CD8-positive, alpha-beta T cell (primary cell): ENCODE measurements at regions of chr12 and their contacts with region 1.

Region 1: DNA sequence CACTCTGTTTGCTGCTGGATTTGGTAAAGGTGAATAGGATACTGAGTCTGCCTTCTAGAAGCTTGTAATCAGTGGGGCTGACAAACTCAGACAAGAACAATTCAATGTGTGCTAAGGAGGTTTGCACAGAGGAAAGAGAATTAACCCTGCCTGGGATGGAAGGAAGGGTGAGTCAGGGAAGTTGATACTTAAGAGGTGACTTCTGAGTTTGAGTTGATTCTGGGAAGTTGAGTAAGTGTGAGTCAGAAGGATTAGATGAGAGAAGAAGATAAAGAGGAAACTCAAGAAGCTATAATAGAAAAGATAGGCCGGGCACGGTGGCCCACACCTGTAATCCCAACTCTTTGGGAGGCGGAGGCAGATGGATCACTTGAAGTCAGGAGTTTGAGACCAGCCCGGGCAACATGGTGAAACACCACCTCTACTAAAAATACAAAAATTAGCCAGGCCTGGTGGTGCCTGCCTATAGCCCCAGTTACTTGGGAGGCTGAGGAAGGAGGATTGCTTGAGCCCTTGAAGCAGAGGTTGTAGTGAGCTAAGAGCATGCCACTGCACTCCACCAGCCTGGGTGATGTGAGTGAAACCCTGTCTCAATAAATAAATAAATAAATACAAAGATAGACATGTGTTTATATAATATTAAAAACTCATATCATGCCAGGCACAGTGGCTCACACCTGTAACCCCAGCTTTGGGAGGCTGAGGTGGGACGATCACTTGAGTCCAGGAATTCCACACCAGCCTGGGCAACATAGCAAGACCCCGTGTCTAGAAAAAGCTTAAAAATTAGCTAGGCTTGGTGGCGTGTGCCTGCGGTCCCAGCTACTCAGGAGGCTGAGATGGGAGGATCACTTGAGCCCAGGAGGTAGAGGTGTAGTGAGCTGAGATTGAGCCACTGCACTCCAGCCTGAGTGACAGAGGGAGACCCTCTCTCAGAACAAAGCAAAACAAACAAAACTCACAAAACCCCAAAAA is 126.8 kb upstream of the CPM start:
- DNase-seq: no peak
- ATAC-seq: no peak
- H3K4me3 ChIP-seq: no peak overlapping the region
- H3K4me3 Mint-ChIP-seq: no peak overlapping the region
- H3K27ac ChIP-seq: no peak overlapping the region
- H3K27ac Mint-ChIP-seq: no peak overlapping the region
- H3K4me1 ChIP-seq: no peaks in the 10 kb centered on the region
- H3K4me1 Mint-ChIP-seq: no peaks in the 10 kb centered on the region
- H3K27me3 ChIP-seq: no peaks in the 10 kb centered on the region
- H3K27me3 Mint-ChIP-seq: no peaks in the 10 kb centered on the region
- CTCF ChIP-seq: no peak

Region 2: DNA sequence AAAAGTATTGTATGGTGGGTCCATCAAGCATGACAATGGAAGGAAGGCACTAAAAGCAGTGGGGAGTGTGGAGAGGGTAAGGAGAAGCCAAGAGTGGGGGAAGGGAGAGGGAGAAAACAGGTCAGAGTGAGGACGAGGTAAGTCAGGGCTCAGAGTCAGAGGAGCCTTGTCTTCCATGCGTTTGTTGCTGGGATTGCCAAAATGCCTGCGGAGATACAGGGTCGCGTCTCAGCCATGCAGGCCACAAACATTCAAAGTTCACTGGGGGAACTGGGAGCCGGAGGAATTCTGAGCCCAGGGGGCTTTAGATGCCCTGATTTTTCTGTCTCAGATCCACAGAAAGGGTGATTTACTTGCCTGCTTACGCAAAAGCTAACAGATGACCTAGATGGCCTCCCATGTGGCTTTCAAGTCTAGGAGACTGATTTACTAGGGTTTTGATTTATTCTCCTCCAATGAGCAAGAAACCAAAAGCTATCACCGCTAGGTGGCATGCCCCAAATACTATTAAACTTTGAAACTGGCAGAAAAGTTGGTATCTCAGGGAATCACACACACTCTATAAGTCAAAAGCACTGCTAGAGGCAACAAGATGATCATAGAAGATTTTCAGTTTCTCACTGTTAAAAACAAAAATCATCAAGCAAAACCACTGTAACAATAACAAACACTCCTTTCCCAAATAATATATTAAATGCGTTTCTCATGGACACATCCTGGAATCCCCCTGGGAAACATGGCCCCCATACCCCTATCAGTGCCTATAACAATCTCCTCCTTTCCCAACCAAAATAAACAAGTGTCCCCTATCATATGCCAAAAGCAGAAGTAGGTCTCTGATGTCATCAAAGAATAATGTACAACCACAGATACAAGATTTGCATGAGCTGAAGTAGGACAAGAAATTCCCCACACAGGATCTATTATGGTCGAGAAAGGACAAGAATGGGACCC is 701.0 kb before region 1 on chr12:
- CTCF ChIA-PET with region 1: no interaction called
- POLR2A ChIA-PET with region 1: no interaction called
- intact Hi-C with region 1: loop called in 1 of 2 experiments (anchors 10 kb)
- DNase-seq: peak; percentile 46 to 85 (median 68)
- ATAC-seq: peak; percentile 93
- H3K4me3 ChIP-seq: no peak overlapping the region
- H3K4me3 Mint-ChIP-seq: no peak overlapping the region
- H3K27ac ChIP-seq: no peak overlapping the region
- H3K27ac Mint-ChIP-seq: peak overlapping the region; percentile 29
- H3K4me1 ChIP-seq: peaks cover 14% of the 10 kb centered on the region
- H3K4me1 Mint-ChIP-seq: peaks cover 31% of the 10 kb centered on the region
- H3K27me3 ChIP-seq: no peaks in the 10 kb centered on the region
- H3K27me3 Mint-ChIP-seq: no peaks in the 10 kb centered on the region
- CTCF ChIP-seq: peak; percentile 64

Region 3: DNA sequence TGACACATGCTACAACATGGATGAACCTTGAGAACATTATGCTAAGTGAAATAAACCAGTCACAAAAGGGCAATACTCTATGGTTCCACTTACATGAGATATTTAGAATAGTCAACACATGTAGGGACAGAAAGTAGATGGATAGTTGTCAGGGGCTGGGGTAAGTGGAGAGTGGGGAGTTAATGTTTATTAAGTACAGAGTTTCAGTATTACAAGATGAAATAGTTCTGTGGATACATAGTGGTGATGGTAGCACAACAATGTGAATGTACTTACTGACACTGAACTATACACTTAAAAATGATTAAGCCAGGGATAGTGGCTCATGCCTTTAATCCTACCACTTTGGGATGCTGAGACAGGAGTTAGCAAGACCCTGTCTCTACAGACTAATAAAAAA is 364.3 kb before region 1 on chr12:
- CTCF ChIA-PET with region 1: no interaction called
- POLR2A ChIA-PET with region 1: no interaction called
- intact Hi-C with region 1: no loop called
- DNase-seq: no peak
- ATAC-seq: no peak
- H3K4me3 ChIP-seq: no peak overlapping the region
- H3K4me3 Mint-ChIP-seq: no peak overlapping the region
- H3K27ac ChIP-seq: no peak overlapping the region
- H3K27ac Mint-ChIP-seq: no peak overlapping the region
- H3K4me1 ChIP-seq: no peaks in the 10 kb centered on the region
- H3K4me1 Mint-ChIP-seq: no peaks in the 10 kb centered on the region
- H3K27me3 ChIP-seq: no peaks in the 10 kb centered on the region
- H3K27me3 Mint-ChIP-seq: no peaks in the 10 kb centered on the region
- CTCF ChIP-seq: no peak

Region 4: GRCh38 chr12:68971351-68971772 is 88.4 kb before region 1 on chr12:
- CTCF ChIA-PET with region 1: no interaction called
- POLR2A ChIA-PET with region 1: no interaction called
- intact Hi-C with region 1: no loop called
- DNase-seq: no peak
- ATAC-seq: no peak
- H3K4me3 ChIP-seq: no peak overlapping the region
- H3K4me3 Mint-ChIP-seq: no peak overlapping the region
- H3K27ac ChIP-seq: no peak overlapping the region
- H3K27ac Mint-ChIP-seq: no peak overlapping the region
- H3K4me1 ChIP-seq: no peaks in the 10 kb centered on the region
- H3K4me1 Mint-ChIP-seq: no peaks in the 10 kb centered on the region
- H3K27me3 ChIP-seq: no peaks in the 10 kb centered on the region
- H3K27me3 Mint-ChIP-seq: peaks cover 3% of the 10 kb centered on the region
- CTCF ChIP-seq: no peak

Region 5: DNA sequence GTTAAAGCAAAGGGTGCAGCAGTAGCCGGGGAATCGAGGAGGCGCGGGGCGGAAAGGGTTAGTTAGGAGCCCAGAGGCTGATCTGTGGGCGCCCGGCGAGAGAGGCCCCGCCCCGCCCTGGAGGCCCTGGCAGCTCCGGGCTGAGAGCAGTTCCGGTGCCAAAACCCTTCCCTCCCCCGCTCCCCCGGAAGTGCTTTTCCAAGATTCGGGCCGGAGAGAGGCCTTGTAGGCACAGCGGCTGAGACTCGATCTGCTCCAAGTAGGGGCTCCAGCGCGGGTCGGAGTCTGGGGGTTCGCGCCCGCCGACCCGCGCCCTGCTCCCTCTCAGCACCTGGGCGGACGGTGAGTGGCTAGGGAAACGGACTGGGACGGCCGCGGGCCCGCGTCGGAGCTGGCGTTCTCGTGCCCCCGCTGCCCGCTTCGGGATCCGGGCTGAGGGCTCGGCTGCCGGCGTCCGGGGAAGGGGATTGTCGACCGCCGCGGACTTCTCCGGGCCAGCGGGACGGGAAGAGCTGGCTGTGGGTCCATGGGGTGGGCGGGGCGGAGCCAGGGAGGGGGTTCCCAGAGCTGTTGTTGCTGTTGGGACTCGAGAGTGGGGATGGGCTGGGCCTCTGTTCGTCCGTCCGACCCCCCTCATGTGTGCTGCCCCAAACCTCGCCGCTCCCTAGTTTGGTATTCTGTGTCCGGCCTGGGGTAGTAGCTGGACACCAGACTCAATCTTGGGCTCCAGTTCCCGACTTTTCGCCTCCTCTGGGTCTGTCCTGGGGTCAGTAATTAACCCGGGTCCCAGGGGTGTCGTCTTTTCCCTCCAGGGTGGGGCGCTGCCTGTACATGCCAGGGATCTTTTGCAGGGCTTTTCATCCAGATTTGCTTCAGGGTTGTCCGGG is 410.7 kb after region 1 on chr12 and contains the start of gene FRS2:
- CTCF ChIA-PET with region 1: no interaction called
- POLR2A ChIA-PET with region 1: no interaction called
- intact Hi-C with region 1: no loop called
- DNase-seq: peak; percentile 66 to 91 (median 84)
- ATAC-seq: peak; percentile 97
- H3K4me3 ChIP-seq: peak within 1 kb of the TSS; percentile 86 to 88
- H3K4me3 Mint-ChIP-seq: peak within 1 kb of the TSS; percentile 98
- H3K27ac ChIP-seq: peak within 1 kb of the TSS; percentile 76 to 82
- H3K27ac Mint-ChIP-seq: peak within 1 kb of the TSS; percentile 97
- H3K4me1 ChIP-seq: peaks cover 30% of the 10 kb centered on the region
- H3K4me1 Mint-ChIP-seq: peaks cover 46% of the 10 kb centered on the region
- H3K27me3 ChIP-seq: no peaks in the 10 kb centered on the region
- H3K27me3 Mint-ChIP-seq: no peaks in the 10 kb centered on the region
- CTCF ChIP-seq: no peak
- total RNA-seq, gene FRS2: 31.1 to 32.4 TPM